Adrenal gland (tissue), 19 donors: ENCODE measurements at regions of chr9 and their contacts with region 1.

Region 1: DNA sequence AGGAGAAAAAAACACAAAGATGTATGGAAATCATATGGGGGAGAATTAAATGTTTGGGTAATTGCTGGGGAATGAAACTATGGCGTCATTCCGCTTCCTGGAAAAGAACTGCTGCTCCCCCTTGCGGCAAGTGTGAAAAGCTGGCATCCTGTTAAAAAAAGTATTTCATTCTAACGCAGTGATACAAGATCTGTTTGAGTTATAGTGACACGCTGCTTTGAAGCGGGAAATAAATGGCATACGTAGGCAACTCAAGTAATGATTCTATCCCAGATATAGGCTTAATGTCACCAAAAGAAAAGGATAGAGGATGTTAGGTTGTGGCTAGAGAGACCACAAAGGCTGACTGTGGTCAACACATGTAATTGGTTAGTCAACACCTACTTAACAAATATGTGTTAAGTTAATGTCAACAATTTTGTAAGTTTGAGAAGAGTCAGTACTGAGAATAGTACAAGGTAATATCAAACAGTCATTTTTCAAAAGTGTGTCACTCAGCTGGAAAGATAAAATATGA is 70.2 kb upstream of the ALDH1A1 start:
- DNase-seq: peak; percentile 47 to 66 (median 50)
- H3K4me3 ChIP-seq: no peak overlapping the region
- H3K27ac ChIP-seq: no peak overlapping the region
- H3K4me1 ChIP-seq: peaks cover 7 to 9% of the 10 kb centered on the region in 2 donors
- H3K27me3 ChIP-seq: no peaks in the 10 kb centered on the region
- CTCF ChIP-seq: peak; percentile 57 to 90 (median 85)
- POLR2A ChIP-seq: no peak

Region 2: DNA sequence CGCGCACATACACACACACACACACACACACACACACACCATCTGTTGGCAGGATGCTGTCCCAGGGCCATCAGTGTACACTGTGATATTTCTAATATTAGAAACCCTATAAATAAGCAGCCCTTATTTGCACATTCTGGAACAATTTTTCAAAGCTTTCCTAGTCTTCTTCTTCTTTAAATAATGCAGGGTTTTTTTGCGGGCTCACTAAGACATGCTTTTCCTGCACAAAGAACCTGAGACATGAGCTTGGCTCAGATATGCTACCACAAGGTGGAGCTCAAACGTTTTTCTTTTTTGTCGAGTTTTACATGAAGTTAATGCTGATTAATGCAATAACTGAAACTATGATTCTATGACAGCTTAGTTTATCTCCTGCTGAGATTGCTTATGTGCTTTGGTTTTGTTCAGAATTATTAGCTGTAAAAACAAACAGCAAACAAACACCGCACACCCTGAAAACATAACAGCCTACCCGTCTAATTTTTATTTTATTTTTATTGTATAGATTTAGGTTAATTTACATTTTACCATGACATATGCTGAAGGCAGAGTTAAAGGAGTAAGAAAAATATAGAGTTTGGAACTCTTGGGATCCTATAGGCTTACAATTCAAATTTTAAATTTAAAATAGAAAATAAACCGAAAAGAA is 166.0 kb before region 1 on chr9:
- intact Hi-C with region 1: loop called in 1 of 2 experiments (anchors 2 kb)
- DNase-seq: peak in 6 of 7 donors; percentile 20 to 58 (median 45)
- H3K4me3 ChIP-seq: peak overlapping the region in 1 of 4 donors; percentile 25
- H3K27ac ChIP-seq: peak overlapping the region in 4 of 5 donors; percentile 53 to 82 (median 78)
- H3K4me1 ChIP-seq: peaks cover 15 to 26% of the 10 kb centered on the region in 2 donors
- H3K27me3 ChIP-seq: no peaks in the 10 kb centered on the region
- CTCF ChIP-seq: peak; percentile 44 to 78 (median 66)
- POLR2A ChIP-seq: no peak

Region 3: DNA sequence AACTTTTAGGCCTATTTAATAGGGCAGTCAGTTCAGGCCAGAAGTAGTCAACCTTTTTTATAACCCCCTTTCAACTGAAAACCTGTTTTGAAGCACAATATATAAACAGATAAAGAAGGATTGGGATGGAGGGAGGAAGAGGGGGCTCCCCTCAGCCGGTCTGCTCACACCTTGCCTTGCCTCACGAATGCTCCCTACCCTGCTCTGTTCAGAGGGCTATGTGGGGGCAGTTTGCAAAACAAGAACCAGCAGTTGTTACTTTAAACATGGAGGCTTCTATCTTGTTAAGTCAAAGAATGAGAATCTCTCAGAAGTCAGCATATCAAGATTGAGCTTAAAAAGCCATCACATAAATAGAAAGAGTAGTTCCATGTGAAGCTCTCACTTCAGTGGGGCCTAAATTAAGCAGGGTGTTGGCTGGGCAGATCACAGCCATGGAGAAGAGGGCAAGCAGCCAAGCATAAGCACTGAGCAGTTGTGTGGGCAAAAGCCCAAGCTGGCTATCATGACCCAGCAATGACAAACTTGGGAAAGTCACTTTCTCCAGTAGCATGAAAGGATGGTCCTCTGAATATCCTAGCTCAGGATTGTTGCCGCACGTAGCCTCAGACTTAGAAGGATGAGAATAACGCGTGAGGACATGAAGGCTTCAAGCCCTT is 140.8 kb before region 1 on chr9:
- intact Hi-C with region 1: loop called in 1 of 2 experiments (anchors 10 kb)
- DNase-seq: peak in 5 of 7 donors; percentile 22 to 52 (median 37)
- H3K4me3 ChIP-seq: no peak overlapping the region
- H3K27ac ChIP-seq: no peak overlapping the region
- H3K4me1 ChIP-seq: no peaks in the 10 kb centered on the region
- H3K27me3 ChIP-seq: no peaks in the 10 kb centered on the region
- CTCF ChIP-seq: no peak
- POLR2A ChIP-seq: no peak

Region 4: DNA sequence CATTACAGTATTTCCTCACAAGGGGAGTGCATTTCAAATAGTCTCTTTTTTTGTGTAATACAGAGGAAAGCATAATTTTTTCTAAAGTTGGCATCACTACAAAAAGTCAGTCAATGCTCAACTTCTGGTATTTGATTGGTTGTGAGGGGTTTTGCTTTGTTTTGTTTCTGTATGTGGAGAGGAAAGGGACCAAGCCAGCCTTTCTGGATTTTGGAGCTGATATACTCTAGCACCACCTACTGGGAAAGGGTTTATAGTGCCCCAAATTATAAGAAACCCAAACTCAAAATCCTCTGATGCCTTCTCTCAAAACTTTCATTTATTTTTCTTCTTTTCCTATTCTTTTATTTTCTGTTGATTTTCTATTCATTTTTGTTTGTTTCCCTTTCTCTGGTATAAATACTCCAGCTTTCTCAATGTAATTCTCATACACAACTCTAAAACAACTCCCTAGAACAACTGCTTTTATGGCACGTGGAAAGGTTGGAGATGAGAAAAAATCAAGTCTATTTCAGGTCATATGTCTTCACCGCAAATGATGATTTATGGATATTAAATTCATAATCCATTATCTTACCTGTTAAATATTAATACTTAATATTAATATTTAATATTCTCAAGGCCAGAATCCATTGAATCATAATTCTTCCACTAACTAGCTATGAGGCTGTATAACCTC is 59.0 kb after region 1 on chr9:
- intact Hi-C with region 1: loop called in 1 of 2 experiments (anchors 10 kb)
- DNase-seq: peak in 3 of 7 donors; percentile 21 to 26 (median 26)
- H3K4me3 ChIP-seq: no peak overlapping the region
- H3K27ac ChIP-seq: no peak overlapping the region
- H3K4me1 ChIP-seq: no peaks in the 10 kb centered on the region
- H3K27me3 ChIP-seq: no peaks in the 10 kb centered on the region
- CTCF ChIP-seq: peak; percentile 63 to 85 (median 74)
- POLR2A ChIP-seq: no peak